ENCODE measurements at regions of chr5 and their contacts with region 1.

Region 1: GRCh38 chr5:170293273-170293672 is 4.3 kb downstream of the LCP2 start:
- DNase-seq: peak; percentile 78 to 79
- ATAC-seq: peak; percentile 61 to 87 (median 86)
- H3K4me3 ChIP-seq: peak overlapping the region; percentile 90
- H3K4me3 Mint-ChIP-seq: peak overlapping the region; percentile 100
- H3K27ac ChIP-seq: peak overlapping the region; percentile 32
- H3K27ac Mint-ChIP-seq: peak overlapping the region; percentile 94 to 99
- H3K4me1 ChIP-seq: peaks cover 70% of the 10 kb centered on the region
- H3K4me1 Mint-ChIP-seq: peaks cover 99 to 100% of the 10 kb centered on the region in 2 donors
- H3K27me3 ChIP-seq: no peaks in the 10 kb centered on the region
- H3K27me3 Mint-ChIP-seq: no peaks in the 10 kb centered on the region
- CTCF ChIP-seq: no peak

Region 2: DNA sequence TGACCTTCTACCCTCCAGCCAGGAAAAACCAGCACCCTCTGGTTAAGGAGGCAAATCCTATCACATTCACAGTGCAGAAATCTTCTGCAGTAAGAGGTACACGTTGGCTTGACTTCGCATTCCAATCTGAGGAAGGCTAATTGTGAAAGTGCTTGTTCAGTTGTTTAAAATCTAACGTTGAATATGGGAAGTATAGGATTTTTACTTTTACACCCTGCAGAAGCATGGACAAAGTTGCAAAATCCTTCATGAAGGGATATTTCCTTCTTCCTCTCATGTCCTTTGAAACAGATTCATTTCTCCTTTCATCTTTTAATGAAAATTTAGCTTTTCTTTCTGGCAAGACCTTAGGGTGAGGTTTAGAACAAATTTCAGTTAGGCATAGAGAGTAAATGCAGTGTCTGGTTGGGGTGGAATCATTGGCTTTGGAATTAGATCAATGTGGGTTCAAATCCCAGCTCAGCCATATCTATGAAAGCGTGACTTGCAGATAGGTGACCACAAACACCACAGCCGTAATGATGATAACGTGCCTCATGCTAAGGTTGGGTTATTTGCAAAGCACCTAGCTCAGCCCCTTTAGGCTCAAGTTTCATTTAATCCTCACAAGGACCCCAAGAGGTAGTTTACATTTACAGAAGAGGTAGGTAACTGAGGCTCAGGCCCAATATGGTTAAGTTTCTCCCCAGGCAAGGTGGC is 102.7 kb before region 1 on chr5:
- intact Hi-C with region 1: no loop called
- DNase-seq: no peak
- ATAC-seq: no peak
- H3K4me3 ChIP-seq: no peak overlapping the region
- H3K4me3 Mint-ChIP-seq: no peak overlapping the region
- H3K27ac ChIP-seq: no peak overlapping the region
- H3K27ac Mint-ChIP-seq: no peak overlapping the region
- H3K4me1 ChIP-seq: no peaks in the 10 kb centered on the region
- H3K4me1 Mint-ChIP-seq: no peaks in the 10 kb centered on the region
- H3K27me3 ChIP-seq: no peaks in the 10 kb centered on the region
- H3K27me3 Mint-ChIP-seq: peaks cover 0 to 3% of the 10 kb centered on the region in 2 donors
- CTCF ChIP-seq: no peak

Region 3: GRCh38 chr5:170262061-170263045 is 30.9 kb before region 1 on chr5:
- intact Hi-C with region 1: loop called (anchors 5 kb)
- DNase-seq: peak in 1 of 2 donors; percentile 84
- ATAC-seq: peak; percentile 34 to 60 (median 55)
- H3K4me3 ChIP-seq: no peak overlapping the region
- H3K4me3 Mint-ChIP-seq: peak overlapping the region; percentile 13
- H3K27ac ChIP-seq: peak overlapping the region; percentile 62
- H3K27ac Mint-ChIP-seq: peak overlapping the region; percentile 88 to 94
- H3K4me1 ChIP-seq: peaks cover 33% of the 10 kb centered on the region
- H3K4me1 Mint-ChIP-seq: peaks cover 46 to 61% of the 10 kb centered on the region in 2 donors
- H3K27me3 ChIP-seq: no peaks in the 10 kb centered on the region
- H3K27me3 Mint-ChIP-seq: no peaks in the 10 kb centered on the region
- CTCF ChIP-seq: no peak

Region 4: GRCh38 chr5:170333161-170333910 is 40.1 kb after region 1 on chr5:
- intact Hi-C with region 1: loop called (anchors 1 kb)
- DNase-seq: peak; percentile 49 to 85
- ATAC-seq: peak; percentile 32 to 63 (median 62)
- H3K4me3 ChIP-seq: no peak overlapping the region
- H3K4me3 Mint-ChIP-seq: peak overlapping the region; percentile 63
- H3K27ac ChIP-seq: peak overlapping the region; percentile 88
- H3K27ac Mint-ChIP-seq: no peak overlapping the region
- H3K4me1 ChIP-seq: peaks cover 81% of the 10 kb centered on the region
- H3K4me1 Mint-ChIP-seq: peaks cover 10 to 36% of the 10 kb centered on the region in 2 donors
- H3K27me3 ChIP-seq: no peaks in the 10 kb centered on the region
- H3K27me3 Mint-ChIP-seq: no peaks in the 10 kb centered on the region
- CTCF ChIP-seq: no peak

Measured in natural killer cell (primary cell).